Common myeloid progenitor, CD34-positive (primary cell): ENCODE measurements at regions of chr1 and their contacts with region 1.

Region 1: GRCh38 chr1:19439464-19440171 is 45.7 kb downstream of the CAPZB start:
- DNase-seq: peak; percentile 48 to 60 (median 58)
- H3K4me3 ChIP-seq: no peak overlapping the region
- H3K27ac ChIP-seq: no peak overlapping the region
- H3K4me1 ChIP-seq: peaks cover 11 to 65% (median 49%) of the 10 kb centered on the region in 4 experiments
- H3K27me3 ChIP-seq: no peaks in the 10 kb centered on the region

Region 2: GRCh38 chr1:19424651-19425570 is 14.7 kb before region 1 on chr1:
- CTCF ChIA-PET with region 1: interaction called, 10 read pairs
- POLR2A ChIA-PET with region 1: no interaction called
- DNase-seq: no peak
- H3K4me3 ChIP-seq: no peak overlapping the region
- H3K27ac ChIP-seq: no peak overlapping the region
- H3K4me1 ChIP-seq: peaks cover 0 to 25% (median 2%) of the 10 kb centered on the region in 4 experiments
- H3K27me3 ChIP-seq: no peaks in the 10 kb centered on the region